ENCODE measurements at regions of chr13 and their contacts with region 1.

Region 1: GRCh38 chr13:32427852-32428580 is at the start of gene N4BP2L1:
- DNase-seq: no peak
- H3K4me3 ChIP-seq: peak within 1 kb of the TSS; percentile 62
- H3K27ac ChIP-seq: no peak within 1 kb of the TSS
- H3K27me3 ChIP-seq: no peaks in the 10 kb centered on the region
- CTCF ChIP-seq: no peak
- polyA plus RNA-seq, gene N4BP2L1: 0.88 and 1.8 TPM in 2 replicates

Region 2: GRCh38 chr13:32503727-32504126 is 75.7 kb after region 1 on chr13:
- CTCF ChIA-PET with region 1: no interaction called
- POLR2A ChIA-PET with region 1: interaction called, 11 read pairs
- DNase-seq: no peak
- H3K4me3 ChIP-seq: no peak overlapping the region
- H3K27ac ChIP-seq: no peak overlapping the region
- H3K27me3 ChIP-seq: no peaks in the 10 kb centered on the region
- CTCF ChIP-seq: no peak

Region 3: GRCh38 chr13:32811297-32811800 is 383.3 kb after region 1 on chr13:
- CTCF ChIA-PET with region 1: no interaction called
- POLR2A ChIA-PET with region 1: no interaction called
- DNase-seq: no peak
- H3K4me3 ChIP-seq: no peak overlapping the region
- H3K27ac ChIP-seq: peak overlapping the region; percentile 21
- H3K27me3 ChIP-seq: peaks cover 6% of the 10 kb centered on the region
- CTCF ChIP-seq: no peak

Measured in AG04450 (cell line).